ENCODE measurements at regions of chr1 and their contacts with region 1.

Region 1: GRCh38 chr1:193211539-193211938 is 25.1 kb upstream of the B3GALT2 start:
- DNase-seq: no peak
- ATAC-seq: no peak
- H3K4me3 ChIP-seq: no peak overlapping the region
- H3K4me3 Mint-ChIP-seq: no peak overlapping the region
- H3K27ac ChIP-seq: peak overlapping the region in 1 of 2 donors; percentile 15
- H3K27ac Mint-ChIP-seq: no peak overlapping the region
- H3K4me1 ChIP-seq: no peaks in the 10 kb centered on the region
- H3K4me1 Mint-ChIP-seq: peaks cover 10% of the 10 kb centered on the region
- H3K27me3 ChIP-seq: no peaks in the 10 kb centered on the region
- H3K27me3 Mint-ChIP-seq: no peaks in the 10 kb centered on the region
- CTCF ChIP-seq: no peak

Region 2: GRCh38 chr1:193069748-193070385 is 141.7 kb before region 1 on chr1:
- CTCF ChIA-PET with region 1: no interaction called
- POLR2A ChIA-PET with region 1: no interaction called
- intact Hi-C with region 1: no loop called
- DNase-seq: no peak
- ATAC-seq: no peak
- H3K4me3 ChIP-seq: no peak overlapping the region
- H3K4me3 Mint-ChIP-seq: peak overlapping the region; percentile 1
- H3K27ac ChIP-seq: peak overlapping the region in 1 of 2 donors; percentile 61
- H3K27ac Mint-ChIP-seq: peak overlapping the region; percentile 21
- H3K4me1 ChIP-seq: peaks cover 14% of the 10 kb centered on the region in 2 donors
- H3K4me1 Mint-ChIP-seq: peaks cover 48% of the 10 kb centered on the region
- H3K27me3 ChIP-seq: no peaks in the 10 kb centered on the region
- H3K27me3 Mint-ChIP-seq: no peaks in the 10 kb centered on the region
- CTCF ChIP-seq: peak; percentile 19

Region 3: DNA sequence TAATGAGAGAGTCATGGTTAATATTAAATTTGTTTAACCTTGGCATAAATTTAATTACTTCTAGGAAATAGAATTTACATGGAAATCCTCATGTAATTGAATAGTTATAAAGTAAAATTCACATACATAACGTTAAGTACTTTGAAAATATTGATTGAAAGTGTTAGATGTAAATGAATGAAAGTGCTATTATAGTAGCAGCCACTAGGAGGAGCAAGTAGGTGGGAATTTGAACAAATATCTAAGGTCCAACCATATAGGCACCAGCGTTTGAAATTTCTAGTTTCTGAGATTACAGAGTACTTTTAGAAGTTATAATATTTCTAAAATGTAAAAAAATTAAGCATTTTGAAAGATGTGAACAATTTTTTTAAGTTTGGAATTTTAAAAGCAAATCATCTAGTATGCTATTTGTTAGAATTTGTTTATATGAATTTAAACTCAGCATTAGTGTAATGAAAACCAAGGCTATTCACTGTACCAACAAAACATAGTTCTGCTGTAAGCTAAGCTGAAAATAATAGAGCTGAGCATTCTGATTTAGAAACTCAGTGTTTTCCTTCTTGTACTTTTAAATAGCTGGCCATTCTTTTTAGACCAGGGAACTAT is 28.4 kb before region 1 on chr1:
- CTCF ChIA-PET with region 1: interaction called, 3 read pairs
- POLR2A ChIA-PET with region 1: no interaction called
- intact Hi-C with region 1: loop called (anchors 5 kb)
- DNase-seq: peak; percentile 64
- ATAC-seq: peak; percentile 54
- H3K4me3 ChIP-seq: no peak overlapping the region
- H3K4me3 Mint-ChIP-seq: no peak overlapping the region
- H3K27ac ChIP-seq: no peak overlapping the region
- H3K27ac Mint-ChIP-seq: no peak overlapping the region
- H3K4me1 ChIP-seq: peaks cover 4 to 13% of the 10 kb centered on the region in 2 donors
- H3K4me1 Mint-ChIP-seq: peaks cover 20% of the 10 kb centered on the region
- H3K27me3 ChIP-seq: no peaks in the 10 kb centered on the region
- H3K27me3 Mint-ChIP-seq: no peaks in the 10 kb centered on the region
- CTCF ChIP-seq: peak; percentile 99

Region 4: GRCh38 chr1:193260896-193261295 is 49.4 kb after region 1 on chr1:
- CTCF ChIA-PET with region 1: no interaction called
- POLR2A ChIA-PET with region 1: no interaction called
- intact Hi-C with region 1: no loop called
- DNase-seq: no peak
- ATAC-seq: no peak
- H3K4me3 ChIP-seq: no peak overlapping the region
- H3K4me3 Mint-ChIP-seq: no peak overlapping the region
- H3K27ac ChIP-seq: no peak overlapping the region
- H3K27ac Mint-ChIP-seq: no peak overlapping the region
- H3K4me1 ChIP-seq: no peaks in the 10 kb centered on the region
- H3K4me1 Mint-ChIP-seq: no peaks in the 10 kb centered on the region
- H3K27me3 ChIP-seq: no peaks in the 10 kb centered on the region
- H3K27me3 Mint-ChIP-seq: no peaks in the 10 kb centered on the region
- CTCF ChIP-seq: no peak

Measured in B cell (primary cell).